RWPE1 (cell line): ENCODE measurements at regions of chr11 and their contacts with region 1.

Region 1: DNA sequence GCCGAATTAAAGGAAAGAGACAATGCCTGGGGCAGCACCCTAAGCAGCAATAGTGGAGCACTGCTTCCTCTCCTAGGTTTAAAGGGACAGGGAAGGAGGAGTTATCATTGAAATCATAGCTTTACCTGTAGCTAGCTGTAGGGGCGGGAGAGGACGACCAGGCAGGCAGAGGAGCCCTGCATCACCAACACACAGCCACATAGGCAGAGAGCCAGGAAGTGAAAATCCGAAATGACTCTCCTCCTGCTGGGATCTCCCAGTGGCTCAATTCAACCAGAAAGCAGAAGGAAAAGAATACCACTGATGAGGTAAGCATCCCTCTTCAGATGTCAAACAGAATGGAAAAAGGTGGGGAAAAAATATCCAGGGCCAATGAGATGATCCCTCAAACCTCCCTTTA is 20.4 kb downstream of the MRGPRX4 start:
- DNase-seq: peak; percentile 18
- H3K27ac ChIP-seq: no peak overlapping the region
- CTCF ChIP-seq: no peak

Region 2: GRCh38 chr11:18229501-18229900 is 36.5 kb after region 1 on chr11:
- CTCF ChIA-PET with region 1: no interaction called
- POLR2A ChIA-PET with region 1: no interaction called
- DNase-seq: no peak
- H3K27ac ChIP-seq: no peak overlapping the region
- CTCF ChIP-seq: no peak

Region 3: GRCh38 chr11:19786644-19787043 is 1593.6 kb after region 1 on chr11:
- CTCF ChIA-PET with region 1: no interaction called
- POLR2A ChIA-PET with region 1: interaction called, 10 read pairs
- DNase-seq: no peak
- H3K27ac ChIP-seq: no peak overlapping the region
- CTCF ChIP-seq: no peak